ENCODE measurements at regions of chr17 and their contacts with region 1.

Region 1: GRCh38 chr17:39676198-39676819 is 8.1 kb downstream of the PNMT start:
- DNase-seq: peak; percentile 66 to 85
- ATAC-seq: peak; percentile 14 to 45
- H3K4me3 ChIP-seq: no peak overlapping the region
- H3K27ac ChIP-seq: peak overlapping the region; percentile 92 to 97 (median 94)
- H3K4me1 ChIP-seq: peaks cover 47 to 55% of the 10 kb centered on the region in 2 donors
- H3K27me3 ChIP-seq: no peaks in the 10 kb centered on the region
- CTCF ChIP-seq: no peak
- POLR2A ChIP-seq: no peak

Region 2: DNA sequence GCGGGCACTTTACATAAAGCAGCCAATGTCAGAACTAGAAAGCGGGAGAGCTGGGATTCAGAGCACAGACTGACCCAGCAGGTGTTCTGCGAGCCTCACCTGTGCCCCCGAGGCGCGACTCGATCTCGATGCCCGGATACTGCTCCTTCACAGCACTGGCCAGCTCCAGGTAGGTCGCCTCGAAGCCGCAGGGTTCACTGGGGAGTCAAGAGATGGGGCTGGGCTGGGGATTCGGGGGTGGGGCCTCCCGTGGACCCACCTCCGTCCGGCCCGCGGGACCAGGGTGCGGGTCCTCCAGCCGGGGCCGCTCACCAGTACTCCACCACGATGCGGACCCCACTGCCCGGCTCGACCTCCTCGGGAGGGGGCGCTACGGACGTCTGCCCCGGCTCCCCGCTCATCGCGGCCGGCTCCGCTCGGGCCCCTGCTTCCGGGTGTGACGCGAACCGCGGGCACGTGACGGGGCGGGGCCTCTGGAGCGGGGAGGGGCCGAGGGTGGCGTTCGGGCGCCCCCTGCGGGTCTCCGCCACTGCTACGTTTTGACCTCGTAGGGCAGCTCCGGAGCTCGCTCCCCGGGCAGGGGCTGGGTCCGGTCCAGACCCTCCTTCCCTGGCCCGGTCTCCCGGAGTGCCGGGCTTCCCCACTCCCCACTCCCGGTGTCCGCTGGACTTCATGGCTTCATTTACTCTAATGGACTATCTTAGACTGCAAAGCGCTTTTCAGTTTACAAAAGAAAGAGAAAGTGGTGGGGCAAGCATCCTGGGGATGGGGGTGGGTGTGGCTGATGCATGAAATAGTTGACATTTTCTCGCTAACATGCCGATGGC is 54.0 kb after region 1 on chr17 and contains the start of gene MIEN1:
- in situ Hi-C with region 1: no loop called
- intact Hi-C with region 1: loop called (anchors 5 kb)
- DNase-seq: peak; percentile 80 to 86
- ATAC-seq: peak; percentile 96
- H3K4me3 ChIP-seq: peak within 1 kb of the TSS; percentile 78 to 92 (median 89)
- H3K27ac ChIP-seq: peak within 1 kb of the TSS; percentile 84 to 89 (median 87)
- H3K4me1 ChIP-seq: peaks cover 7 to 9% of the 10 kb centered on the region in 2 donors
- H3K27me3 ChIP-seq: no peaks in the 10 kb centered on the region
- CTCF ChIP-seq: peak; percentile 83 to 95 (median 92)
- POLR2A ChIP-seq: peak; percentile 65 to 87
- total RNA-seq, gene MIEN1: 42.8 to 81.9 (median 67.7) TPM

Region 3: DNA sequence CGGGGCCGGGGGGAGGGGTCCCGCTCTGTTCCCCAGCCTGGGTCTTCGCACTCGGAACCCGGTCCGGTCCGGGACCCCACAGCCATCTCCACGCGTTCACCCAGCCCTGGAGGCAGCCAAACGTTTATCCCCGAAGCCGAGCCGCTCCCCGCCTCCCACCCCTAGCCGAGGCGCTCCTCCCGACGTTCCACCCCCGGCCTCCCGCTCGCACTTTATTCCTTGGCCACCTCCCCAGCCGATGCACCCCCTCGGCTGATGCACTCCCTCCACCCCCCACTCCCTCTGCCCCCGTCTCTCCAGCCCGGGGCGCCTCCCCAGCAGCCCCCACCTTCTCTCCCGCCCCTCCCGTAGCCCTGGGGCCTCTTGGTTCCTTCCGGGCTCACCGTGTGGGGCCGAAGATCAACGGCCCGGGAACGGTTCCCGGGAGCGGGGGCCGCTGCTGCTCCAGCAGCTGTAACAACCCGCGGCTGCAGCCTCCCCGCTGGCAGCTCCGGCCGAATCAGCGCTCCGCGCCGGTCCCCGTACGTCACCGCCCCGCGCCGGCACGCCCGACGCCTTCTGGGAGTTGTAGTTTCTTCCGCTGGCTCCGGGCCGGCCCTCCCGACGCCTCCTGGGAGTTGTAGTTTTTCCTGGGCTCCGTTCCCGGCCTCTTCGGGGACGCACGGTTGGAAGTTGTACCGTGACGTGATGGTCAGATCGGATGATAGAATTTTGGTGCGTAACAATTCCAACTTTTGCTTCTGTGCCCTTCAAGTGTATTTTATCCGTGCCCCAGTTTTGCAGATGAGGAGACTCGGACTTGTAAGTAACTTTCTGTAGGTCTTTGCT is 251.0 kb after region 1 on chr17 and contains the starts of genes LRRC3C and ORMDL3:
- in situ Hi-C with region 1: no loop called
- intact Hi-C with region 1: loop called (anchors 5 kb)
- DNase-seq: peak; percentile 89 to 91
- ATAC-seq: peak; percentile 77 to 82
- H3K4me3 ChIP-seq: peak within 1 kb of the TSS; percentile 96 to 99 (median 98)
- H3K27ac ChIP-seq: peak within 1 kb of the TSS; percentile 90 to 99 (median 96)
- H3K4me1 ChIP-seq: peaks cover 35 to 46% of the 10 kb centered on the region in 2 donors
- H3K27me3 ChIP-seq: no peaks in the 10 kb centered on the region
- CTCF ChIP-seq: peak in 1 of 5 experiments; percentile 11
- POLR2A ChIP-seq: peak; percentile 67 to 84
- total RNA-seq, gene LRRC3C: not detected
- total RNA-seq, gene ORMDL3: 17.3 to 36.2 (median 29.6) TPM

Measured in gastrocnemius medialis (tissue), 4 donors.